PC-3 (cell line): ENCODE measurements at regions of chr6 and their contacts with region 1.

Region 1: DNA sequence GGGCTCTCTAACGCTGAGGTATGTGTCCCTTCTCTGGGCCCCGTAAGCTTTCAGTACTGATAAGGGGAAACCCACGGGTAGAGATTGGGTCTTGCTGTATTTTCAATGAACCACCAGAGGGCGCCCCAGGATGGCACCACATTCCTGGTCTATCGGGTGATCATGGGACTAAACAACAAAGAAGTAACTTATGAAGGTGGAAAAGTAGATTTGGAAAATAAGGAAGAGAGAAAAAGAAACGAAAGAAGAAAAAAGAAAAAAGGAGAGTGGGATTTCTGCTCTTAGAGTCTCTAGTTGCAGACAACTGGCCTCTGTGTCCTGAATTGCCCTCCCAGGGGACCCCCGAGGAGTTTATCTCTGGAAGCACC is 93.8 kb downstream of the GMPR start:
- DNase-seq: peak; percentile 83
- ATAC-seq: peak; percentile 78
- H3K4me3 ChIP-seq: peak overlapping the region; percentile 41; the same call in 1 of the 2 replicates
- H3K27ac ChIP-seq: peak overlapping the region; percentile 8; the same call in 1 of the 2 replicates
- H3K4me1 ChIP-seq: peaks cover 36% of the 10 kb centered on the region
- H3K27me3 ChIP-seq: no peaks in the 10 kb centered on the region
- CTCF ChIP-seq: peak; percentile 95

Region 2: GRCh38 chr6:16228709-16229665 is 103.2 kb before region 1 on chr6:
- CTCF ChIA-PET with region 1: no interaction called
- POLR2A ChIA-PET with region 1: no interaction called
- intact Hi-C with region 1: loop called (anchors 1 kb)
- DNase-seq: peak; percentile 35
- ATAC-seq: peak; percentile 87
- H3K4me3 ChIP-seq: peak overlapping the region; percentile 60
- H3K27ac ChIP-seq: no peak overlapping the region
- H3K4me1 ChIP-seq: peaks cover 5% of the 10 kb centered on the region; the same call in 1 of the 2 replicates
- H3K27me3 ChIP-seq: no peaks in the 10 kb centered on the region
- CTCF ChIP-seq: peak; percentile 39; the same call in 1 of the 2 replicates

Region 3: DNA sequence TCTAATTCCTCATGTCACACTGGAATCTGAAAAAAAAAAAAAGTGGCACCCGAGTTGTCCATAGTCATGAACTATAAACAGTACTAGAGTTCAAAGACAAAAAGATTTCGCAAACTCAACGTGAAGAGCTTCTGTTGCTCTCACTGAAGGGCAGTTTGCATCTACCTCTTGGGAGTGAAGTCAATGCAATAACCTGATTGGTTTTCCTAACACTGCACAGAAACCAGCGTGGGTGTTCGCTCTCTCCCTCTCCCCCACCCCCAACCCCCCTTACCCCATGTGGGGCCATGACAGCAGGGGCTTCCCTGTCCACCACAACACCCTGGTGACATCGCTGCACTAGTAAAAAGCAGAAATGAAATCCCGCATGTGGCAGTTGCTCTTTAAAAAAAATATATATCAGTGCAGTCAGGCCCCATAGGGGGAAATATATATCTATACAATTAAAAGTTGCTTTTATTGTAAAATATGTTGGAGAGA is 26.9 kb before region 1 on chr6:
- CTCF ChIA-PET with region 1: no interaction called
- POLR2A ChIA-PET with region 1: no interaction called
- intact Hi-C with region 1: no loop called
- DNase-seq: no peak
- ATAC-seq: no peak
- H3K4me3 ChIP-seq: no peak overlapping the region
- H3K27ac ChIP-seq: no peak overlapping the region
- H3K4me1 ChIP-seq: no peaks in the 10 kb centered on the region
- H3K27me3 ChIP-seq: no peaks in the 10 kb centered on the region
- CTCF ChIP-seq: no peak

Region 4: GRCh38 chr6:16374461-16375195 is 42.5 kb after region 1 on chr6:
- CTCF ChIA-PET with region 1: no interaction called
- POLR2A ChIA-PET with region 1: no interaction called
- intact Hi-C with region 1: no loop called
- DNase-seq: no peak
- ATAC-seq: no peak
- H3K4me3 ChIP-seq: no peak overlapping the region
- H3K27ac ChIP-seq: no peak overlapping the region
- H3K4me1 ChIP-seq: no peaks in the 10 kb centered on the region
- H3K27me3 ChIP-seq: no peaks in the 10 kb centered on the region
- CTCF ChIP-seq: no peak

Region 5: GRCh38 chr6:16409531-16410441 is 77.6 kb after region 1 on chr6:
- CTCF ChIA-PET with region 1: interaction called, 17 read pairs
- POLR2A ChIA-PET with region 1: interaction called, 3 read pairs
- intact Hi-C with region 1: loop called (anchors 1 kb)
- DNase-seq: peak; percentile 83
- ATAC-seq: peak; percentile 97
- H3K4me3 ChIP-seq: peak overlapping the region; percentile 54
- H3K27ac ChIP-seq: peak overlapping the region; percentile 10; the same call in 1 of the 2 replicates
- H3K4me1 ChIP-seq: peaks cover 15% of the 10 kb centered on the region
- H3K27me3 ChIP-seq: no peaks in the 10 kb centered on the region
- CTCF ChIP-seq: peak; percentile 94

Region 6: DNA sequence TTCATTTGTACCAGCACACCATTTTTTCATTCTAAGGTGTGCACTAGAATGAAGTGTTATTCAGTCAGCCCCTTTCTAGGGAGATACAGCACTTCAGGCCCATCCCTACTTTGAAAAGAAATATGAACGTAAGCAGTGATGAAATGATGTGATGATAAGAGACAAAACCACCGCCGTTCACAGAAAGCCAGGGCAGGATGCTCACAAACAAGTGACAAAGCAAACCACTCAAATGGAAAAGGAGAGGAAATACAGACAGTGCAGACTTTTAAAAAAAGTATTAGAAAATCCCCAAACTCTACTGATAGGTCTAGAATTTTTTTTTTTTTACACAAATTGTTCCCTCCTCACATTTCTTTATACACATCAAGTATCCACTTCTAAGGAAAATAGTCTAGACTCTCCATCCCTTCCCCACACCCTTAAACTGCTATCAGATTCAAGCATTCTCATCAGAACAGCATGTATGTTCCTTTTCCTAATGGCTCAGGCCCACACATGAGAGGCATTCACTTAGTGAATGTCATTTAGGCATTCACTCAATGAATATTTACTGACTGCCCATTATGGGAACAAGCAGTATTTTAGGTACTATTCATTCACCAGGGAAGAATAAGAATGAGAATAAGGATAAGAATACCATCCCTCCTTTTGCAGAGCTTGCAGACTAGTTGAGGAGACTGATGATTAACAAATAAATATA is 149.7 kb after region 1 on chr6:
- CTCF ChIA-PET with region 1: no interaction called
- POLR2A ChIA-PET with region 1: no interaction called
- intact Hi-C with region 1: no loop called
- DNase-seq: no peak
- ATAC-seq: no peak
- H3K4me3 ChIP-seq: no peak overlapping the region
- H3K27ac ChIP-seq: no peak overlapping the region
- H3K4me1 ChIP-seq: no peaks in the 10 kb centered on the region
- H3K27me3 ChIP-seq: no peaks in the 10 kb centered on the region
- CTCF ChIP-seq: no peak

Region 7: GRCh38 chr6:16494793-16495192 is 162.6 kb after region 1 on chr6:
- CTCF ChIA-PET with region 1: no interaction called
- POLR2A ChIA-PET with region 1: no interaction called
- intact Hi-C with region 1: loop called (anchors 5 kb)
- DNase-seq: peak; percentile 53
- ATAC-seq: no peak
- H3K4me3 ChIP-seq: no peak overlapping the region
- H3K27ac ChIP-seq: no peak overlapping the region
- H3K4me1 ChIP-seq: peaks cover 23% of the 10 kb centered on the region
- H3K27me3 ChIP-seq: no peaks in the 10 kb centered on the region
- CTCF ChIP-seq: no peak

Region 8: GRCh38 chr6:16956361-16956760 is 624.2 kb after region 1 on chr6:
- CTCF ChIA-PET with region 1: no interaction called
- POLR2A ChIA-PET with region 1: no interaction called
- intact Hi-C with region 1: loop called (anchors 10 kb)
- DNase-seq: peak; percentile 7
- ATAC-seq: no peak
- H3K4me3 ChIP-seq: no peak overlapping the region
- H3K27ac ChIP-seq: no peak overlapping the region
- H3K4me1 ChIP-seq: peaks cover 3% of the 10 kb centered on the region; the same call in 1 of the 2 replicates
- H3K27me3 ChIP-seq: no peaks in the 10 kb centered on the region
- CTCF ChIP-seq: peak; percentile 29; the same call in 1 of the 2 replicates

Region 9: GRCh38 chr6:17093686-17094085 is 761.5 kb after region 1 on chr6:
- CTCF ChIA-PET with region 1: no interaction called
- POLR2A ChIA-PET with region 1: no interaction called
- intact Hi-C with region 1: loop called (anchors 5 kb)
- DNase-seq: peak; percentile 62
- ATAC-seq: peak; percentile 53; the same call in 1 of the 2 replicates
- H3K4me3 ChIP-seq: no peak overlapping the region
- H3K27ac ChIP-seq: no peak overlapping the region
- H3K4me1 ChIP-seq: peaks cover 7% of the 10 kb centered on the region
- H3K27me3 ChIP-seq: no peaks in the 10 kb centered on the region
- CTCF ChIP-seq: peak; percentile 74